IMR-90 (cell line): ENCODE measurements at regions of chr7 and their contacts with region 1.

Region 1: DNA sequence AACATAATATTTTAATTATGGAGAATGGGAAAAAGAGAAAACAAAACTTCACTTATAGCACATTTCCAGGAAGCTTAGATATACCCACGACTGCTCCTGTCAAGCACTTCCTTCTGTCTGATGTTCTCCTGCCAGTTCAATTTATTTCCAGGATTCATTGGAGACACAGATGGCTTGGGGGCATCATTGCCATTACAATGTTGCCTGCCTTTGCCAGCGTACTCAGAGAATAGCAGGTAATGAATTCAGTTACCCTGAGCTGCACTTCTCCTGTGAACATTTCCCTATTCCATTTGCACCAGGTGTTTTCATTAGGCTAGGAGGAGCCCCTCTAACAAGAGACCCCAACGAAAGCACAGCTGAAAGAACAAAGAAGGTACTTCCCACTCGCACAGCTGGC is 33.7 kb downstream of the INSIG1 start:
- DNase-seq: no peak
- ATAC-seq: no peak
- H3K4me3 ChIP-seq: no peak overlapping the region
- H3K27ac ChIP-seq: no peak overlapping the region
- H3K4me1 ChIP-seq: no peaks in the 10 kb centered on the region
- H3K27me3 ChIP-seq: peaks cover 4% of the 10 kb centered on the region; the same call in 1 of the 2 replicates
- CTCF ChIP-seq: no peak
- POLR2A ChIP-seq: no peak
- RAD21 ChIP-seq: no peak

Region 2: GRCh38 chr7:154960063-154960790 is 371.2 kb before region 1 on chr7:
- CTCF ChIA-PET with region 1: no interaction called
- POLR2A ChIA-PET with region 1: no interaction called
- dilution Hi-C with region 1: no loop called
- in situ Hi-C with region 1: no loop called
- intact Hi-C with region 1: no loop called
- DNase-seq: no peak
- ATAC-seq: no peak
- H3K4me3 ChIP-seq: no peak overlapping the region
- H3K27ac ChIP-seq: no peak overlapping the region
- H3K4me1 ChIP-seq: peaks cover 3% of the 10 kb centered on the region; the same call in 1 of the 2 replicates
- H3K27me3 ChIP-seq: no peaks in the 10 kb centered on the region
- CTCF ChIP-seq: no peak
- POLR2A ChIP-seq: no peak
- RAD21 ChIP-seq: no peak

Region 3: GRCh38 chr7:155003376-155004214 is 327.8 kb before region 1 on chr7:
- CTCF ChIA-PET with region 1: interaction called, 10 read pairs
- POLR2A ChIA-PET with region 1: no interaction called
- dilution Hi-C with region 1: no loop called
- in situ Hi-C with region 1: no loop called
- intact Hi-C with region 1: no loop called
- DNase-seq: peak; percentile 71
- ATAC-seq: peak; percentile 94
- H3K4me3 ChIP-seq: peak overlapping the region; percentile 80
- H3K27ac ChIP-seq: peak overlapping the region; percentile 81
- H3K4me1 ChIP-seq: 0 out of 2 replicates have a peak, but pooled peaks cover 1% of the 10 kb centered on the region
- H3K27me3 ChIP-seq: no peaks in the 10 kb centered on the region
- CTCF ChIP-seq: no peak
- POLR2A ChIP-seq: no peak; the same call in 1 of the 2 replicates
- RAD21 ChIP-seq: no peak

Region 4: GRCh38 chr7:155356323-155357105 is 25.1 kb after region 1 on chr7:
- CTCF ChIA-PET with region 1: no interaction called
- POLR2A ChIA-PET with region 1: no interaction called
- dilution Hi-C with region 1: no loop called
- in situ Hi-C with region 1: no loop called
- intact Hi-C with region 1: no loop called
- DNase-seq: no peak
- ATAC-seq: no peak
- H3K4me3 ChIP-seq: no peak overlapping the region
- H3K27ac ChIP-seq: no peak overlapping the region
- H3K4me1 ChIP-seq: no peaks in the 10 kb centered on the region
- H3K27me3 ChIP-seq: peaks cover 32% of the 10 kb centered on the region
- CTCF ChIP-seq: 0 out of 2 replicates have a peak, but pooled peaks have one; percentile 17
- POLR2A ChIP-seq: no peak
- RAD21 ChIP-seq: no peak